AG04450 (cell line): ENCODE measurements at regions of chr2 and their contacts with region 1.

Region 1: DNA sequence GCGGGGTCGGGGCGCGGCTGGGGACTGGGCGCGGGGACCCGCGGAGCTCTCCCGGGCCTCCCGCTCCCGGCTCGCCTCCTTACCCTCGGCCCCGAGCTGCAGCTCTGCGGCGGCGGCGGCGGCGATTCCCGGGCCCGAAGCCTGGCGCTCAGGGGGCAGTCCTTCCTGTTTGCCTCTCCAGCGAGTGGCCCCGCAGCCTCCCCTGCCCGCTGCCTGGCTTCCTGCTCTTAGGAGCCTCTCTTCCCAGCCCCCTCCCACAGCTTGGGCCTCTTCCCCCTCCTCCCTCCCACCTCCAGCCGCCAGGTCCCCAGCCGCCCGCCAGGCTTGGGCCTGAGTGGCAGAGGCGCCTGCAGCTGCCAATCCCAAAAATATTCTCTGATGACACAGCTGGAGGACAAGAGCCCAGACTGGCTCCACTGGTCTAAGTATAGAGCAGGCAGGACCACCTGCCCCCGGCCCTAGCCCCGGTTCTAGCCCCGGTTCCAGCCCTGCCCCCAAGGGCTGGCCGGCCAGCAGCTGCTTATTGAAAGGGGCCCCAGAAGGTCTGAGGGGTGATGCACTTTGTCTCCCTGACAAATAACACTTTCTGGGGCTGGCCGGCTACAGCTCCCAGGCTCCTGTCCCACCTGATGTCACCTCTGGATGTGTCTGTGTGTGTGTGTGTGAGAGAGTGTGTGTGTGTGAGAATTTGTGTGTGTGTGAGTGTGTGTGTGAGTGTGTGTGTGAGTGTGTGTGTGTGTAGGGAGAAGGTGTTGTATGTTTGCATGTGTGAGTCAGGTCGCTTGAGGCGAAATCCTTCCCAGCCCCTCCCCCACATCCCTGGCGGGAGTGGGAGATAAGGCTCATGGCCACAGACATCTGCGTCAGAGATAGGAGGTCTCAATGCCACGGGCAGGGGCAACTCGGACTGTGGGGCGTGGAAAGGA is at the start of gene OBSL1:
- DNase-seq: no peak
- H3K4me3 ChIP-seq: peak within 1 kb of the TSS; percentile 68
- H3K27ac ChIP-seq: peak within 1 kb of the TSS; percentile 21
- H3K27me3 ChIP-seq: peaks cover 22% of the 10 kb centered on the region
- CTCF ChIP-seq: no peak
- polyA plus RNA-seq, gene OBSL1: 35.5 and 46.8 TPM in 2 replicates

Region 2: DNA sequence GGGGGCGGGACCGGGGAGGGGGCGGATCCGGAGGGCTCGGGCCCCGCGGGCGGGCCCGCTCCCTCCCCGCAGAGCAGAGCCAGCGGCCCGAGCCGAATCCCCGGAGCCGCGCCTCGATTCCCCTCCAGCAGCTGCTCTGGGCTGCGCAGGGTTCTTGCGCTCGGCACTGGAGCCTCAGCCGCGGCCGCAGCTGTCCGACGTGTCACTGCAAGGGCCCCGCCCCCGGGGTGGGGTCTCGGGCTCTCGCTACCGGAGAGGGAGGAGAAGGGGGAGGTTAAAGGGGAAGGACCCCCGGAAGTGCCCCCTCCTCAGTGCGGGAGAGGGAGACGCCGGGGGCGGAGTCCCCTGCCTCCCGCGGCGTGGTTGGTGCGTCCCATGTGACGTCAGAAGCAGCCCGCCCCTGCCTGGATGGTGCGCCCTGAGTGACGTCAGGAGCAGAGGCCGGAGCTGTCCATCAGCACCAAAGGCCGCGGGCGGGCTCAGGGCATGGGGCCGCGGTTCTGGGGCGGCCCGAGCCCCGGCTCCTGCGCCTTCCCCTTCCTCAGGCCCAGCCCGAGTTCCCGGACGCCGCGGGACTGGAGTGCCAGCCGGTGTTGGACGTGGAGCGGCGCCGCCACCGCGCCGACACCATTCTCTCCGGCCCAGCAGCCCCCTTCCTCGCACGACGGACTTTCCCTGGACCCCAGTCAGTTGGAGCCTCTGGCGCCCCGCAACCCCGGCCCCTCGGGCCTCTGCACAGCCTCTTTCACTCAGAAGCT is 27.8 kb before region 1 on chr2 and contains the starts of genes CHPF and TMEM198:
- CTCF ChIA-PET with region 1: interaction called, 5 read pairs
- POLR2A ChIA-PET with region 1: interaction called, 10 read pairs
- DNase-seq: peak; percentile 95
- H3K4me3 ChIP-seq: peak within 1 kb of the TSS; percentile 75
- H3K27ac ChIP-seq: peak within 1 kb of the TSS; percentile 78
- H3K27me3 ChIP-seq: no peaks in the 10 kb centered on the region
- CTCF ChIP-seq: no peak
- polyA plus RNA-seq, gene CHPF: 24.4 and 37.2 TPM in 2 replicates
- polyA plus RNA-seq, gene TMEM198: 0.83 and 1.2 TPM in 2 replicates

Region 3: DNA sequence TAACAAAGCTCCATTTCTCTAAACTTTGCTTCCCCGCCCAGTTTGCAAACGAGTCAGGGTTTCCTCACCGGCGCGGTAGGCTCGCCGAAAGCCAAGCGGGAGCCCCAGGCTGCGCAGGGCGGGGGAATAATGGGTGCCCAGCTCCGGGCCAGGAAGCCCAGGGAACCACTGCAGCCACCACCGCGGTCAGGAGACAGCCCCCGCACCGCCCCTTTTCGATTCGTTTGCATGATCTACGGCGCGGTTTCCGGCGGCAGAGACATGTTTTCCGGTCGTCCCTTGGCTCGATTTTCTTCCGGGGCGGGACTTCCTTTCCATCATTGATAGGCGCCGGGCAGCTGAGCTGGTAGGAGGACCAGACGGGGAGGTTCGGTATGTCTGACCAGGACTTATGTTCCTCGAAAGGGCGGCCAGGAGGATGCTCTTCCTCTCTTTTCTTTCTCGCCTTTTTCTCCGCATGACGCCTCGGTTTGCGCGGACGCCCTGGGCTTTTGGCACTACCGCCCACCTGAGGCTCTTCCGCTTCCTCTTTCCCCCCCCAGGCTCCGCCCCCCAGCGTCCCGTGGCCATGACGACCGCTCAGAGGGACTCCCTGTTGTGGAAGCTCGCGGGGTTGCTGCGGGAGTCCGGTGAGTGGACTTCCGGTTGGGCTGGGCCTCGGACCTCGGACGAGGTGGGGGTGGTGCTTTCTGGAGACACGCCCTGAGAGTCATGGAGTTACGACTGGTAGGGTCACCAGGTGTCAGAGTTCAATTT is 26.2 kb after region 1 on chr2 and contains the start of gene STK11IP:
- CTCF ChIA-PET with region 1: interaction called, 5 read pairs
- POLR2A ChIA-PET with region 1: interaction called, 18 read pairs
- DNase-seq: peak; percentile 90
- H3K4me3 ChIP-seq: peak within 1 kb of the TSS; percentile 94
- H3K27ac ChIP-seq: peak within 1 kb of the TSS; percentile 93
- H3K27me3 ChIP-seq: peaks cover 3% of the 10 kb centered on the region
- CTCF ChIP-seq: no peak
- polyA plus RNA-seq, gene STK11IP: 7.7 and 11.8 TPM in 2 replicates